ENCODE measurements at regions of chr4 and their contacts with region 1.

Region 1: GRCh38 chr4:75490155-75490554 is 24.0 kb downstream of the RCHY1 start:
- DNase-seq: peak; percentile 23
- H3K4me3 ChIP-seq: no peak overlapping the region
- H3K27ac ChIP-seq: no peak overlapping the region
- H3K4me1 ChIP-seq: no peaks in the 10 kb centered on the region
- H3K27me3 ChIP-seq: no peaks in the 10 kb centered on the region
- CTCF ChIP-seq: no peak
- POLR2A ChIP-seq: no peak

Region 2: GRCh38 chr4:74335341-74336021 is 1154.7 kb before region 1 on chr4:
- CTCF ChIA-PET with region 1: no interaction called
- POLR2A ChIA-PET with region 1: no interaction called
- dilution Hi-C with region 1: no loop called
- intact Hi-C with region 1: no loop called
- DNase-seq: no peak
- H3K4me3 ChIP-seq: no peak overlapping the region
- H3K27ac ChIP-seq: no peak overlapping the region
- H3K4me1 ChIP-seq: no peaks in the 10 kb centered on the region
- H3K27me3 ChIP-seq: no peaks in the 10 kb centered on the region
- CTCF ChIP-seq: no peak
- POLR2A ChIP-seq: no peak

Region 3: DNA sequence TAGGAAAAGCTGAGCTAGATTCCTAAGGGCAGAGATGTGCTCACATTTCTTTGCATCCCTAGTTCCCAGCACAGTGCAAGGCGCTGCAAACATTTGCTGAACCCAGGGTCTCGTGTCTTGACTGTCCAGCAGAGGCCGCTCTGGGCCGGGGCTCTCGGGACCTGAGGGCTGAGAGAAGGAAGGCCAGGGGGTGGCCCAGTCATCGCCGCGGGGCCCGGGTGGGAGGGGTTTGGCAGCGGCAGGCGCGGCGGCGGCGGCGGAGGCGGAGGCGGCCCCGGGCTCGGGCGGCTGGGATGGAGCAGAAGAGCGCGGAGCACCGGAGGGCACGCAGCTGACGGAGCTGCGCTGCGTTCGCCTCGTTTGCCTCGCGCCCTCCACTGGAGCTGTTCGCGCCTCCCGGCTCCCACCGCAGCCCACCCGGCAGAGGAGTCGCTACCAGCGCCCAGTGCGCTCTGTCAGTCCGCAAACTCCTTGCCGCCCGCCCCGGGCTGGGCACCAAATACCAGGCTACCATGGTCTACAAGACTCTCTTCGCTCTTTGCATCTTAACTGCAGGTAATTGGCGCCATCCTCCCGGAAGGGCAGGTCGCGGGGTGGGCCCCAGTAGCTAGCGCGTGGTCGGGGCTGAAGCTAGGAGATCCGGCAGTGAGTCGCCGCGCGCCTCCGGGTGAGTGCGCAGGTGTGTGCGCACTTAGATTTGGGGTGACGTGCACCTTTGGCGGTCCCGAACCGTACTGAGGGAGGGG is 557.2 kb before region 1 on chr4 and contains the start of gene PARM1:
- CTCF ChIA-PET with region 1: interaction called, 6 read pairs
- POLR2A ChIA-PET with region 1: no interaction called
- dilution Hi-C with region 1: no loop called
- intact Hi-C with region 1: loop called (anchors 5 kb)
- DNase-seq: peak; percentile 79
- H3K4me3 ChIP-seq: peak within 1 kb of the TSS; percentile 15 to 38 (median 33)
- H3K27ac ChIP-seq: no peak within 1 kb of the TSS
- H3K4me1 ChIP-seq: peaks cover 17% of the 10 kb centered on the region
- H3K27me3 ChIP-seq: peaks cover 35 to 44% of the 10 kb centered on the region in 2 experiments
- CTCF ChIP-seq: peak; percentile 59 to 81
- POLR2A ChIP-seq: no peak
- total RNA-seq, gene PARM1: not detected in 2 replicates

Region 4: DNA sequence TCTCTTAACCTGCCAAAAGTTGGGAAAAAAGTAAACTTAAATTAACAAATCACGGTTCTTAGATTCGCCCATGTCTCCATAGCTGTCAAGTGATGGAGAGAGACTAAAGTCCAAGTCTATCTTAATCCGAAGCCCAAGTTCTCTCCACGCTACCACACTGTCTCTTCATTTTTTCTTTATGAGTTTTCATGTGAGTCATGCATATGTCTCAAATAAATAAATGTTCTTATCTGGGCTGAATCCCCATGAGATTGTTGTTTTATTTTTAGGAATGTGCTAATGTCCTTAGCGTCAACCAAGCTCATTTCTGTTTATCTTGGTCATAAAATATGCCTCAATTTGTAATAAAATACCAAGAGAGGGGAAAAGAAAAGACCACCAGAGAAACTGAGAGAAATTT is 145.2 kb before region 1 on chr4:
- CTCF ChIA-PET with region 1: no interaction called
- POLR2A ChIA-PET with region 1: no interaction called
- dilution Hi-C with region 1: no loop called
- intact Hi-C with region 1: no loop called
- DNase-seq: no peak
- H3K4me3 ChIP-seq: no peak overlapping the region
- H3K27ac ChIP-seq: no peak overlapping the region
- H3K4me1 ChIP-seq: no peaks in the 10 kb centered on the region
- H3K27me3 ChIP-seq: no peaks in the 10 kb centered on the region
- CTCF ChIP-seq: no peak
- POLR2A ChIP-seq: no peak

Region 5: DNA sequence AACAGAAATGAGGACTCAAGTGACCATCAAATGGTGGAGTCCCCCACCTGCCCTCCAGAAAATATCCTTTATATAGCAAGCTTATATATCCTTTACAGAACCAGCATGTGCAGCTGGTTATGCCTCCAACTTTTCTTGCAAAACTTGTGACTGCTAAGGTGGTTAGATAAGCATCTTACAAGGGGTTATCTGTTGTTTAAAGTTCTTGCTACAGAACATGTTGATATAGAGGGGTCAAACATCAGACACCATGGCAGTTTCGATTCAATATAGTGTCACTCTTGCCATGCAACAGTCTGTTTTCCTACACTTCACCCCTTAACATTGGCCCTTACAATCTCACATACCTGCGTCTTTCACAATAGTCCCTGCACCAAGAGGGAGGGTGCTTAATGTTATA is 35.6 kb before region 1 on chr4:
- CTCF ChIA-PET with region 1: no interaction called
- POLR2A ChIA-PET with region 1: no interaction called
- dilution Hi-C with region 1: no loop called
- intact Hi-C with region 1: no loop called
- DNase-seq: no peak
- H3K4me3 ChIP-seq: no peak overlapping the region
- H3K27ac ChIP-seq: no peak overlapping the region
- H3K4me1 ChIP-seq: no peaks in the 10 kb centered on the region
- H3K27me3 ChIP-seq: peaks cover 1 to 2% of the 10 kb centered on the region in 2 experiments
- CTCF ChIP-seq: no peak
- POLR2A ChIP-seq: no peak

Region 6: GRCh38 chr4:75514131-75514948 is 24.2 kb after region 1 on chr4 and contains the starts of genes RCHY1 and THAP6:
- CTCF ChIA-PET with region 1: interaction called, 10 read pairs
- POLR2A ChIA-PET with region 1: no interaction called
- dilution Hi-C with region 1: no loop called
- intact Hi-C with region 1: loop called (anchors 2 kb)
- DNase-seq: peak; percentile 92
- H3K4me3 ChIP-seq: peak within 1 kb of the TSS; percentile 71 to 94 (median 81)
- H3K27ac ChIP-seq: peak within 1 kb of the TSS; percentile 72
- H3K4me1 ChIP-seq: peaks cover 35% of the 10 kb centered on the region
- H3K27me3 ChIP-seq: no peaks in the 10 kb centered on the region
- CTCF ChIP-seq: no peak
- POLR2A ChIP-seq: peak; percentile 93
- total RNA-seq, gene RCHY1: 29.1 and 30.9 TPM in 2 replicates
- total RNA-seq, gene THAP6: 6.8 and 8.0 TPM in 2 replicates

Measured in endothelial cell of umbilical vein (primary cell).